H1 (cell line): ENCODE measurements at regions of chr2 and their contacts with region 1.

Region 1: GRCh38 chr2:233857511-233858141 is 3.3 kb upstream of the HJURP start:
- DNase-seq: peak in 1 of 2 experiments; percentile 89
- H3K4me3 ChIP-seq: no peak overlapping the region
- H3K27ac ChIP-seq: no peak overlapping the region
- H3K4me1 ChIP-seq: peaks cover 0 to 5% (median 4%) of the 10 kb centered on the region in 4 experiments; a peak in 5 of 7 replicates
- H3K27me3 ChIP-seq: no peaks in the 10 kb centered on the region; a peak in 1 of 7 replicates
- CTCF ChIP-seq: peak; percentile 76 to 78 (median 77)
- EP300 ChIP-seq: no peak
- POLR2A ChIP-seq: no peak
- RAD21 ChIP-seq: peak; percentile 7 to 43; a peak in 3 of 4 replicates

Region 2: GRCh38 chr2:233584210-233584729 is 273.4 kb before region 1 on chr2:
- CTCF ChIA-PET with region 1: no interaction called
- POLR2A ChIA-PET with region 1: no interaction called
- DNase-seq: no peak
- H3K4me3 ChIP-seq: no peak overlapping the region
- H3K27ac ChIP-seq: no peak overlapping the region
- H3K4me1 ChIP-seq: peaks cover 0 to 3% (median 0%) of the 10 kb centered on the region in 4 experiments; a peak in 1 of 7 replicates
- H3K27me3 ChIP-seq: no peaks in the 10 kb centered on the region
- CTCF ChIP-seq: no peak
- EP300 ChIP-seq: no peak
- POLR2A ChIP-seq: no peak
- RAD21 ChIP-seq: no peak

Region 3: GRCh38 chr2:233828546-233829192 is 29.0 kb before region 1 on chr2:
- CTCF ChIA-PET with region 1: no interaction called
- POLR2A ChIA-PET with region 1: no interaction called
- DNase-seq: no peak
- H3K4me3 ChIP-seq: no peak overlapping the region
- H3K27ac ChIP-seq: no peak overlapping the region
- H3K4me1 ChIP-seq: no peaks in the 10 kb centered on the region
- H3K27me3 ChIP-seq: no peaks in the 10 kb centered on the region
- CTCF ChIP-seq: no peak
- EP300 ChIP-seq: no peak
- POLR2A ChIP-seq: no peak
- RAD21 ChIP-seq: no peak

Region 4: DNA sequence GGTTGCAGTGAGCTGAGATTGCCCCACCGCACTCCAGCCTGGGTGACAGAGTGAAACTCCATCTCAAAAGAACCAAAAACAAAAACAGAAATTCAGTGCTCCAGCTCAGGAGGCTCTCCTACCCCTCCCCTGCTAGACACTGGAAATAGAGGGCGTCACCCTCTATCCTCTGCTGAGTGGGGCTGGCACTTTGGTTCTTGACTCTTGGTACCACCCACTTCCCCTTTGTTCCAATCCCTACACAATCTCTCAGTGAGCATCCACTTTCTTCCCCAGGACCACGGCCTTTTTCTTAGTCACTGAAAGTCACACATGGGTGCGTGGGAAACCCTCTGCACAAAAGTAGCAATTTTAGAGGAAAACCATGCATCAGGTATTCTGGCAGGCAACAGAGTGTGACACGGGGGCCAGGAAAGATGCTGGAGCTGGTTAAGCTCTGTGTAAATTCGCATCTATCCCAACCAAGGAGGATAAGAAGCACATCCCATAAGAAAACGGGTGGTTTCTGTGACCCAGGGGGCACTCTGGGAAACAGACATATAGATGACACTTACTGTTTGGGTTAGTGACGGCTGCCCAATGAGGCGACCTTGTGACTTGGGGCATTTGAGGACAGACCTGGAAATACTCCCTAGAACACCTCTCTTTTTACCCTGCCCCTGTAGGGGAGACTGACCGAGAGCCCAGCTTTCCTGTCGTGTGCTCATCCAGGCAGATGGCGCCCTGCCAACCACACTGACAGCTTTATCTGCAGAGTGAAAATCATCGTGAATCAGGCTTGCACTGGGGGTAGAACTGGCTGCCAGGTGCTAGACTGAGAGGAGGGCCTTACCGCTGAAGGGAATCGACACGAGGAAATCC is 11.0 kb before region 1 on chr2:
- CTCF ChIA-PET with region 1: interaction called, 11 read pairs
- POLR2A ChIA-PET with region 1: interaction called, 4 read pairs
- DNase-seq: no peak
- H3K4me3 ChIP-seq: no peak overlapping the region
- H3K27ac ChIP-seq: no peak overlapping the region
- H3K4me1 ChIP-seq: no peaks in the 10 kb centered on the region
- H3K27me3 ChIP-seq: no peaks in the 10 kb centered on the region
- CTCF ChIP-seq: no peak
- EP300 ChIP-seq: no peak
- POLR2A ChIP-seq: no peak
- RAD21 ChIP-seq: no peak

Region 5: DNA sequence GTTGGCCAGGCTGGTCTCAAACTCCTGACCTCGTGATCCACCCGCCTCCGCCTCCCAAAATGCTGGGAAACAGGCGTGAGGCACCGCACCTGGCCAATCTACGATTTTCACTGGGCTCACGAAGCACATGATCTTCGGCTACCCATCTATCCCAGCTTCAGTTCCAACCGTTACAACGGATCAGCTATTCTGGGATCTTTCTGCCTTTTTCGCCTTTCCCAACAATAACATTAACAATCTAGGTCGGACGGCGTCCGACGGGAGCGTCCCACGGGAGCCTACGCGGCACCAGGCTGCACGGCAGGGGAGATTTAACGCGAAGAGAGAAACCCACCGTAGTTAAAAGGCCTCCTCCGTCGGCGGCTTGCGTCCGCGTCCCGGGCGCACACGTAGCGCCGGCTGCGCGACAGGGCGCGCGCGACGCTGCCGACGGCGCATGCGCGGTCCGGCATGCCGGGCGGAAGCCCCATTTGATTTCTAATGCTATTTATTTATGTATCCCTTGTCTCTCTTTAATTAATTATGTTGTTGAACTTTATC is 10.4 kb after region 1 on chr2 and contains the start of gene MSL3B:
- CTCF ChIA-PET with region 1: interaction called, 24 read pairs
- POLR2A ChIA-PET with region 1: interaction called, 6 read pairs
- DNase-seq: peak in 1 of 2 experiments; percentile 70
- H3K4me3 ChIP-seq: peak within 1 kb of the TSS; percentile 55 to 91 (median 63)
- H3K27ac ChIP-seq: 0 out of 2 replicates have a peak within 1 kb of the TSS, but pooled peaks have one; percentile 30
- H3K4me1 ChIP-seq: no peaks in the 10 kb centered on the region
- H3K27me3 ChIP-seq: no peaks in the 10 kb centered on the region; a peak in 1 of 7 replicates
- CTCF ChIP-seq: no peak
- EP300 ChIP-seq: no peak
- POLR2A ChIP-seq: peak in 1 of 2 experiments; percentile 66; a peak in 2 of 3 replicates
- RAD21 ChIP-seq: no peak